ENCODE measurements at regions of chr9 and their contacts with region 1.

Region 1: DNA sequence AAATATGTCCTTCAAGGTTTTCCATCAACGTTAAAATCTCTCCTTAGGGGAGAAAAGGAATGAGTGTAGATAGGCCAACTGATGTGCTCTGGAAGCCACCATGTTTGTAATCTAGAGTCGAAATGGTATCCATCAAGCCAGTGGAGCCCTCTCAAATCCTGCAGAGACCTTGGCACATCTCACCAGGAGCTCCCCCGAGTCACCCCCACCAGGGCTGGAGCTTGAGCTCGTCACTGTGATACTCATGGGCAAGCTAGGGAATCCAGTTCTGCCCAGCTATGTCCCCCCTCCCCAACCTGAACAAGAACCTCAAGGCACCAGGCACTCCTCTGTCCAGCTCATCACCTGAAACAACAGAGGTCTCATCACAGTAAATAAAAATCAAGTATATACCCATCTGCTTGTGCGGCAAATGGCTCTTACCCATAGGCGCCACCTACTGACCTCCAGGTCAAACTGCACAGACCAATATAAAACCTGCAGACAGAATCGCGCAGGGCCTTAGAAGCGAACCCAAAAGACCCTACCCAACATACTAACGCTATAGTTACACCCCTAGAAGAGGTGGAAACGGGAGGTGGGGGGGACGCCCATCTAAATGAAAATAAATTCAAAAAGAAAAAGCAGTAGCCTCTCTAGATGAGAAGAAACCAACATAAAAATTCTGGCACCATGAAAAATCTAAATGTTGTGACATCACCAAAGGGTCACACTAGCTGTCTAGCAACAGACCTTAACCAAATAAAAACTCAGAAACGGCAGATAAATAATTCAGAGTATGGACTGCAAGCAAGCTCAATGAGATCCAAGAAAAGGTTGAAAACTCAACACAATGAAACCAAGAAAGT is 75.0 kb downstream of the TTC39B start:
- DNase-seq: peak; percentile 58
- H3K4me3 ChIP-seq: peak overlapping the region in 1 of 2 experiments; percentile 29; a peak in 1 of 4 replicates
- H3K27ac ChIP-seq: no peak overlapping the region
- H3K4me1 ChIP-seq: no peaks in the 10 kb centered on the region
- H3K27me3 ChIP-seq: no peaks in the 10 kb centered on the region
- CTCF ChIP-seq: peak; percentile 62
- EP300 ChIP-seq: no peak
- RAD21 ChIP-seq: peak; percentile 55

Region 2: GRCh38 chr9:15182101-15182551 is 49.9 kb before region 1 on chr9:
- CTCF ChIA-PET with region 1: no interaction called
- POLR2A ChIA-PET with region 1: no interaction called
- DNase-seq: peak; percentile 33
- H3K4me3 ChIP-seq: no peak overlapping the region
- H3K27ac ChIP-seq: peak overlapping the region in 1 of 2 experiments; percentile 47; a peak in 2 of 4 replicates
- H3K4me1 ChIP-seq: peaks cover 0 to 15% of the 10 kb centered on the region in 2 experiments; a peak in 2 of 4 replicates
- H3K27me3 ChIP-seq: no peaks in the 10 kb centered on the region
- CTCF ChIP-seq: no peak
- EP300 ChIP-seq: no peak; a peak in 1 of 4 replicates
- RAD21 ChIP-seq: no peak

Region 3: DNA sequence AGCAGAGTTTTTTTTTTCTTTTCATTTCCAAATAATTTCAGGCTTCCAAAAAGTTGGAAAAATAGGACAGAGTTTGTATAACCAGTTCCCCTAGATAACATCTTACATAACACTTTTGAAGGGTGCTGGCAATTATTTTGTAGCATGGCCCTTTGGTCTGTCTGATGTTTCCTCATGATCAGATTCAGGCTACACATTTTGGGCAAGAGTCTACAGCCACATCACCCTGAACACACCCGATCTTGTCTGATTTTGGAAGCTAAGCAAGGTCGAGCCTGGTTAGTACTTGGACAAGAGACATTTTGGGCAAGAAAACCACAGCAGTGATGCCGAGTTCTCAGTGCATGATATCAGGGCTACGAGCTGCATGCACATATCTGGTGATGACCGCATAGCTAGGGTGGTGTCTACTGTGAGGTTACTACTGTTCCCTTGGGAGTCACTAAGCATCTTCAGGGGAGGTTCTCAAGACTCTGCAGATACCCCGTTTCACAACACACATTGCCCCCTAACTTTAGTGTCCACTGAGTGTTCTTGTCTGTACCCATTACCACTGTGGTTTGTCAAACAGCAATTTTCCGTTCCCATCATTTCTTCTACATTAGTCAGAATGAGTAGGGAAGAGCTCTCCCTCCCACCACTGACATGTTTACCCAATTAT is 11.2 kb before region 1 on chr9:
- CTCF ChIA-PET with region 1: interaction called, 20 read pairs
- POLR2A ChIA-PET with region 1: no interaction called
- DNase-seq: no peak
- H3K4me3 ChIP-seq: no peak overlapping the region
- H3K27ac ChIP-seq: no peak overlapping the region
- H3K4me1 ChIP-seq: peaks cover 0 to 2% of the 10 kb centered on the region in 2 experiments; a peak in 1 of 4 replicates
- H3K27me3 ChIP-seq: no peaks in the 10 kb centered on the region
- CTCF ChIP-seq: no peak
- EP300 ChIP-seq: no peak
- RAD21 ChIP-seq: no peak

Measured in SK-N-SH (cell line).